Mammary epithelial cell (primary cell): ENCODE measurements at regions of chr12 and their contacts with region 1.

Region 1: DNA sequence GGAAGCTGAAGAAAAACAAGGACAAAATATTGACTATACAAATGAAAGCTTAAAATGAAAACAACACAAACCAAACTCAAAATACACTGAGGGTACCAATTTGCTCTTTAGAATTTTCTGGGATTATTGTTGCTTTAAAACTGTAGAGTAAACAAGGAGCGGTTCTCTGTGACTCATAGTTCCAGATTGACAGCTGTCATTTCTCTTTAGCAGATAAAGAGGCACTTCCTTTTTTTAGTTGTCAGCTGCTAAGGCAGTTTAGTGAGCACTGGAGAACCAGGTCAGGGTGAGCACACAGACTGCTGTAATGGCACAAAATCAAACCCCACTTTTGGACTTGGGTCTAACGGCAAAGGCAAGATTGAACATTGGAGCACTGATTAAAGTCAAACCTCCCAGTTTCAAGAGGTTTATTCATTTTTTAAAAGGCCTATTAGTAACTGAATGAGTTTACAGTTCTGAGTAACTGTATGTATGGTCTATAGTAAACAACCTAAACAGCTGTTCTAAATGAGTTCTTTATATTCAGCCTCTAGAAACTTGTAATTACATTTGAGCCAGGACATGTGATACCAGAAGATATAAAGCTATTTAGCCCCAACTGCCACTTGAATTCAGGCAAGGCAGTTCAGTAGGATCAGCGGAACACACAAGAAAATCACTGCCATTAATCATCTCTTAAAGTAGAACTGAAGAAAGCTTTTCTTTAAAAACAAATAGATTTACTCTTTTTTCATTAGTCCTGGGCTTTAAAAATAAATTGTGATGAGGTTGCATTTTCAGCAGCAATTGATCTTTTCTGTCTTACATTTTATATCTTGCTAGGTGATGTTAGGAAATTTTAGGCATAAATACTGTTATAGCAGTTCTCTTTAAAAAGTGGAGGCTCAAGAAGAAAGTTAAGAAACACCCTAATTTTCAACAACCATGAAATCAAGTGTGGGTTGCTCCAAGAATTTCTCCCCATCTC is 71.7 kb upstream of the PRICKLE1 start:
- DNase-seq: no peak
- H3K4me3 ChIP-seq: no peak overlapping the region
- H3K27ac ChIP-seq: no peak overlapping the region
- H3K4me1 ChIP-seq: peaks cover 2% of the 10 kb centered on the region
- H3K27me3 ChIP-seq: no peaks in the 10 kb centered on the region
- CTCF ChIP-seq: no peak

Region 2: DNA sequence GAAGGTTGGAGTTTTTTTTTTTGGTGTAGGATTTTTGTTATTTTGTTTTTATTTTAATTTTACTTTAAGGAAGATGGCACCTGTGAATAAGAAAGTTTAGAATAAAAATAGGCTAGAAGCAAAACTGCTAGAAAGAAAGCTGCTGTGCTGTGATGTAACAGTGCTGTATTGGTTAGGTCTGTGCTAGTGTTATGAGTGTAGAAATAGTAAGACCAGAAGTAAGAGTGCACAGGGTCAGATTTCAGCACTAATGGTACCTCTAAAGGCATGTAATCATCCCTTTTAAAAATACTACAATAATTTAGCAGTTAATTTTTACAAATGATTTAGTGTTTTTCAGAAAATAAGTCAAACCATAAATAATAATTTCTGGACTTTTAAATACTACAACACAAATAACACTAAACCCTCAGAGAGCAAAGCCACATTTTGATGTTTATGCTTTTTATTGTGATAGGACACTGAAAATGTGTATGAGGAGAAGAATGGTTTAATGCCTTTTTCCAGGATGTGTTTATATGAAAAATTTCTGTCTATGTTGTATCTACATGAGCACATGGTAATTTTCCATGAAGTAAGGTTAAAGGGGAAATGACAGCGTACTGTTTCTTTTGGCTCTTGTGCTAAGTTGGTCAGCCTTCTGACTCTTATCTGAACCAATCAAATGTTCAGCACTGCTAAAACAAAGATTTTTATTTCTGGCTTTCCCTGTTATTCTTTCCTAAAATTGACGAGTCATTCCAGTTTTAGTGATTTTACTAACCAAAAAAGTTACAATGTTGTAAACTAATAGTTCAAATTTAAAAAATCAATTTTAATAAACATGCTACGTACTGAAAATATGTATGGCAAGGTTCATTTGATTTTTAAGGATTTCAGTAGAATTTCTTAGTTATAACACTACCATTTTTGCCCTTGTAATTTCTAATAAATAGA is 239.1 kb before region 1 on chr12:
- CTCF ChIA-PET with region 1: no interaction called
- dilution Hi-C with region 1: no loop called
- in situ Hi-C with region 1: no loop called
- intact Hi-C with region 1: no loop called
- DNase-seq: peak; percentile 6
- H3K4me3 ChIP-seq: no peak overlapping the region
- H3K27ac ChIP-seq: no peak overlapping the region
- H3K4me1 ChIP-seq: no peaks in the 10 kb centered on the region
- H3K27me3 ChIP-seq: no peaks in the 10 kb centered on the region
- CTCF ChIP-seq: no peak

Region 3: GRCh38 chr12:42612231-42612613 is 49.0 kb before region 1 on chr12:
- CTCF ChIA-PET with region 1: no interaction called
- dilution Hi-C with region 1: loop called (anchors 5 kb)
- in situ Hi-C with region 1: no loop called
- intact Hi-C with region 1: no loop called
- DNase-seq: no peak
- H3K4me3 ChIP-seq: no peak overlapping the region
- H3K27ac ChIP-seq: no peak overlapping the region
- H3K4me1 ChIP-seq: no peaks in the 10 kb centered on the region
- H3K27me3 ChIP-seq: no peaks in the 10 kb centered on the region
- CTCF ChIP-seq: no peak

Region 4: DNA sequence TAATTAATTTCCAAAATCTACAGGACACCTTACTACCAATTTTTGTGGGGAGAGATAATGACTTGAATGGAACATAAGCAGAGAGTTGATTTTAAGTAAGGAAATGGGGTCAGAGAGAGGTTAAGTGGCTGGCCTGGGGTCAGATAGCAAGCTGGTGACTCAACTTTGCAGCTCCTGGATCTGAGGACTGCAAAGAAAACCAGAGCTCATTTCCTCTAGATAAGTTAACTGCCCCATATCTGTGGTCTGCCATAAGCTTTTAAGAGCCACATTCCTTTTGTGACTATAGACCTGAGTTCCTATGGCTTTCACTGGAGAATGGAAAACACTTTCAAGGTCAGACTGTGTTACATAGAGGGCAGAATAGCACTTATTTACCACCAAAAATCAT is 129.5 kb after region 1 on chr12:
- CTCF ChIA-PET with region 1: no interaction called
- dilution Hi-C with region 1: no loop called
- in situ Hi-C with region 1: no loop called
- intact Hi-C with region 1: no loop called
- DNase-seq: peak; percentile 52
- H3K4me3 ChIP-seq: no peak overlapping the region
- H3K27ac ChIP-seq: no peak overlapping the region
- H3K4me1 ChIP-seq: peaks cover 18% of the 10 kb centered on the region
- H3K27me3 ChIP-seq: no peaks in the 10 kb centered on the region
- CTCF ChIP-seq: no peak

Region 5: DNA sequence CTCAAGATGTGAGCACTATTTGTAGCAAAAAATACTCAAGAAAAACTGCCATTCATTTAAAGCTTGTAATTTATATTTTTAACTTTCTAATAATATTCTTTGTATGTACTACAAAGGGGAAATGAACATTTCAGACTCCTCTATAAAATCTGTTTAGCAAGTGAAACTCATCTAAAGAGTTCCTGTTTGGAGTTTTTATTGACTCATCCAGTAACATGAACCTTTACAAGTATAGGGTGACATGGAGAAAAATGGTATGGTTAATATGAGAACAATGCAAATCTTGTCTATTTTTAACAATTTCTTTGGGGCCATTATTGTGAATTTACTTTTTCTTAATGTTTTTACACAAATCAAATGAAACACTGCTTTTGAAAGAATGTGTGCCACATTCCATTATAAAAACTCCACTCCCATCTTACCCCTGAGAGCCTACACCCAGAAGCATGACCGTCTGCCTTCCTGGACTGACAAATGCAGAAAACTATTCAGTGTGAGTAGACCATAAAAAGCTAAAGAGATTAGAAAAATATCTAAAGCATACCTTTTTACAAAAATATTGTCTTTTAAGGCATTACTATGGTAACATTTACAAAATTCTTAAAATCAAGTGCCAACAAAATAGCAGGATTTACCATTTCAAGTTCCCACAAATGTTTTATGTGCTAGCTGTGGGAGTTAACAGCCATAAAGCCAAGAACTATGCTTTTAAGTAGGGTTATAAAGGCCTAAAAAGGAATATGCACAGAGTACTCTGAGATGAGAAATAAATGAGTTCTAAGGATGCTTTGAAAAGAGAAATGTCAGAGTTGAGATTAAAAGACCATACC is 746.8 kb after region 1 on chr12:
- CTCF ChIA-PET with region 1: no interaction called
- dilution Hi-C with region 1: no loop called
- in situ Hi-C with region 1: no loop called
- intact Hi-C with region 1: no loop called
- DNase-seq: peak; percentile 35
- H3K4me3 ChIP-seq: no peak overlapping the region
- H3K27ac ChIP-seq: no peak overlapping the region
- H3K4me1 ChIP-seq: no peaks in the 10 kb centered on the region
- H3K27me3 ChIP-seq: peaks cover 2% of the 10 kb centered on the region
- CTCF ChIP-seq: no peak